Activated CD4-positive, alpha-beta memory T cell treated with anti-CD3 and anti-CD28 coated beads for 36 hours (primary cell): ENCODE measurements at regions of chr9 and their contacts with region 1.

Region 1: GRCh38 chr9:4306066-4306775 is 6.4 kb upstream of the GLIS3 start:
- DNase-seq: peak; percentile 65
- H3K4me3 Mint-ChIP-seq: no peak overlapping the region
- H3K27ac Mint-ChIP-seq: peak overlapping the region; percentile 18
- H3K4me1 Mint-ChIP-seq: peaks cover 37% of the 10 kb centered on the region
- H3K27me3 Mint-ChIP-seq: peaks cover 2% of the 10 kb centered on the region

Region 2: DNA sequence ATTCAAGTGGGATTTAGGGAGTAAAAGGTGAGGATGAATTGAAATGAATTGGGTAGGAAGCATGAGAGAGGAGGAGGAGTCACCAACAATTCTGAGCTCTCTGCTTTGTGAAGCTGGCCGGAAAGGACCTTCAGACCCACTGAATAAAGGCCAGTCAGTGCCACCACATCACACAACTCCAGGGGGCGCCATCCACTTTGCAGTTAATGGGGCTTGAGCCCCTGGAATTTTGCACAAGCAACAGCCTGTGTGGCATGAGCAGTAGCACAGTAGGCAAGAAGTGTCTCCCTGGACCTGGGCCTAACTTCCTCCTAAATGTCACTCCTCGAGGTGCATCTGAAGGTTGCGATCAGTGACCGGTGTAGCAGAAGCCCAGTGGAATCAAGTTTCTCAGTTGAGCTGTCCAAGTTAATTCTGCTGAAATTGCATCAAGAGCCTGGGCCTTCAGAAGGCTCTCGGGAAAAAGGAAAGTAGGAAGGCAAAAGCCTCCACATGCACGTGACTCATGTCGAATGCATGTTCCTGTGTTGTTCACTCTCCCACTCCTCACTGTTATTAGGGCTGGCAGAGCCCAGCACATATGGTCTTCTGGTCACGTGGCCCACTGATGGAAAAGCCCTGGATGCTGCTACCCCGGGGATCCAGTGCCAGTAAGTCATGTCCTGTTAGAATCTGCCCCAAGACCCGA is 21.4 kb after region 1 on chr9:
- CTCF ChIA-PET with region 1: no interaction called
- POLR2A ChIA-PET with region 1: no interaction called
- intact Hi-C with region 1: no loop called
- DNase-seq: no peak
- H3K4me3 Mint-ChIP-seq: no peak overlapping the region
- H3K27ac Mint-ChIP-seq: no peak overlapping the region
- H3K4me1 Mint-ChIP-seq: peaks cover 8% of the 10 kb centered on the region
- H3K27me3 Mint-ChIP-seq: peaks cover 9% of the 10 kb centered on the region

Region 3: DNA sequence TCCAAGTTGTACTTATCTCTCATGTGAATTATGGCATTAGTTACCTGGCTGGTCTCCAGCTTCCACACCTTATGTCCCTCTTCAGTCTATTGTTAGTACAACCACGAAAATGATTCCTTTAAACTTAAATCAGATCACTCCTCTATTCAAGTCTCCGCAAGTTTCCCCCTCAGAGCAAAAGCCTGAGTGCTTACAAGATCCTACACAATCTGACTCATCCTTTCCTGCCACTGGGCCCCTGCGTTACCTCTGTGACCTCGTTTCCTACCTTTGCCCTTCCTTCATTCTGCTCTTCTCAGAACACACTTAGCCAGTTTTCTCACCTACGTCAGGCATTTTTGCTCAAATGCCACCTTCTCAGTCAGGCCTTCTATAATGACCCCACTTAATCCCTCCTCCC is 38.7 kb after region 1 on chr9:
- CTCF ChIA-PET with region 1: interaction called, 4 read pairs
- POLR2A ChIA-PET with region 1: no interaction called
- intact Hi-C with region 1: loop called (anchors 1 kb)
- DNase-seq: peak; percentile 79
- H3K4me3 Mint-ChIP-seq: no peak overlapping the region
- H3K27ac Mint-ChIP-seq: no peak overlapping the region
- H3K4me1 Mint-ChIP-seq: peaks cover 13% of the 10 kb centered on the region
- H3K27me3 Mint-ChIP-seq: no peaks in the 10 kb centered on the region